PC-9 (cell line): ENCODE measurements at regions of chr3 and their contacts with region 1.

Region 1: DNA sequence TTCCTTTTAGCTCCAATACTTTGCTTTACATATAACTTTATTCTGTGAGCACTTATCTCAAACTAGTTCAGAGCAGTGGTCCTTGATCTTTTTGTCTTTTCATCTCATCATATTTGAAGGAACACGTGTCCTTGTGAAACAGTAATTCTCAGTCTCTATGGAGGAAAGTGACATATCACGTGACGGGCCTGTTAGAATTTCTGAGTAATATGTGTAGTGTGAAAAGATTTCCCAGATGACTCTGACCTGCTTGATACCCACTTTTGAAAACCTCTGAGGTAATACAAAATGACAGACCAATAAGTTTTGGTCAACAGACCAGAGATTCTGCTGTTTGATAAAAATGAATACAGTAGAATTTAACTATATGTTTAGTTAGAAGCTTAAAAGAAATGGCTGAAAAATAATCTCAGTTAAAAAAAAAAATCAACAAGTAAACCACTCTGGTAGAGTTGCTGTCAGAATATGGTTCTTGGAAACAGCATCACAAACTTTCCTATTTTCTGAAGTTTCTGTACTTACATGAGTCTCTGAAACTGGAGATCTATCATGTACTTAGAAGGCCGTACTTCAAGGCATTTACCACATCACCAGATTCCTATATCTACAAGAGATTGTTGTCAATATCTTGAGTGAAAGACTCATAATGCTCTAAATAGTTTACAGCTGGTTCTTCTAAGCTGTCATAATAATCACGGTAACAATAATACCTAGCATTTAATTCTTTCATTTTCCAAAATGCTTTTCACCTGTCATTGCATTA is 590.2 kb upstream of the TBL1XR1 start:
- DNase-seq: no peak
- H3K4me3 ChIP-seq: no peak overlapping the region
- H3K27ac ChIP-seq: no peak overlapping the region
- H3K4me1 ChIP-seq: no peaks in the 10 kb centered on the region
- H3K27me3 ChIP-seq: no peaks in the 10 kb centered on the region
- CTCF ChIP-seq: no peak

Region 2: DNA sequence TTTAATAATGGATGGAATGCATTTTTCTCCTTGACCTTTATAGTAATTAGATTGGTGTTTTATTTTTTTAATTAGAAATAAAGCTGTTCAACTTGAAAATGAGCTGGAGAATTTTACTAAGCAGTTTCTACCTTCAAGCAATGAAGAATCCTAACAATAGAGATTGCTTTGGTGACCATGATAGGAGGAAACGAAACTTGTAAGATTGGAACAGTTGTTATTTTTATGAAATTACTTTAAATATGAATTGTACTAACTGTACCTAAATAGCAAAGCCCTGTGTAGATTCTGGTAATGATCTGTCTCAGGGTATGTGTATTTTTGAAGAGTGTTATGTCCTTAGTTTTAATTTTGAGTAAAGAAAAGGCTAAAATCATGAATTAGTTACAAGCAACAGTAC is 1604.4 kb after region 1 on chr3:
- CTCF ChIA-PET with region 1: interaction called, 12 read pairs
- POLR2A ChIA-PET with region 1: no interaction called
- intact Hi-C with region 1: no loop called
- DNase-seq: no peak
- H3K4me3 ChIP-seq: no peak overlapping the region
- H3K27ac ChIP-seq: no peak overlapping the region
- H3K4me1 ChIP-seq: no peaks in the 10 kb centered on the region
- H3K27me3 ChIP-seq: no peaks in the 10 kb centered on the region
- CTCF ChIP-seq: no peak